ENCODE measurements at regions of chr2 and their contacts with region 1.

Region 1: GRCh38 chr2:18378020-18378653 is 182.3 kb downstream of the RDH14 start:
- DNase-seq: no peak
- ATAC-seq: peak; percentile 54

Region 2: DNA sequence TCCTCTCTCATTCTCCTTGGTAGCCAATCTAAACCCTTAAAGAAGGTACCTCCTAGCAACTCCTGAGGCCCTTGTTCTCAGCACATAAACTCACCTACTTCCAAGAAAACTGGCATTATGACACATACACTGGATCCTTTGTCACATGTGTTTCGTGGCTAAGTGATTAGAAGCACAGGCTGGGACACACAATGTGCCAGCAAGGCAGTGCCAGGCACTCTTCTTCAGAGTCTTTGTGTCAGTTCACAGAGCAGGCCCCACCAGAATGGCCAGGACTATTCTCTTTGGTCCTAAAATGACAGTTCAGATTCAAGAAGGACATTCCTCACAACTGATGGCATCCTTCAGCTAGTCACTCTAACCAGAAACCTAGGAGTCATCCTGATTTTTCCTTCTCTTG is 664.8 kb before region 1 on chr2:
- intact Hi-C with region 1: no loop called
- DNase-seq: no peak
- ATAC-seq: peak; percentile 20

Region 3: DNA sequence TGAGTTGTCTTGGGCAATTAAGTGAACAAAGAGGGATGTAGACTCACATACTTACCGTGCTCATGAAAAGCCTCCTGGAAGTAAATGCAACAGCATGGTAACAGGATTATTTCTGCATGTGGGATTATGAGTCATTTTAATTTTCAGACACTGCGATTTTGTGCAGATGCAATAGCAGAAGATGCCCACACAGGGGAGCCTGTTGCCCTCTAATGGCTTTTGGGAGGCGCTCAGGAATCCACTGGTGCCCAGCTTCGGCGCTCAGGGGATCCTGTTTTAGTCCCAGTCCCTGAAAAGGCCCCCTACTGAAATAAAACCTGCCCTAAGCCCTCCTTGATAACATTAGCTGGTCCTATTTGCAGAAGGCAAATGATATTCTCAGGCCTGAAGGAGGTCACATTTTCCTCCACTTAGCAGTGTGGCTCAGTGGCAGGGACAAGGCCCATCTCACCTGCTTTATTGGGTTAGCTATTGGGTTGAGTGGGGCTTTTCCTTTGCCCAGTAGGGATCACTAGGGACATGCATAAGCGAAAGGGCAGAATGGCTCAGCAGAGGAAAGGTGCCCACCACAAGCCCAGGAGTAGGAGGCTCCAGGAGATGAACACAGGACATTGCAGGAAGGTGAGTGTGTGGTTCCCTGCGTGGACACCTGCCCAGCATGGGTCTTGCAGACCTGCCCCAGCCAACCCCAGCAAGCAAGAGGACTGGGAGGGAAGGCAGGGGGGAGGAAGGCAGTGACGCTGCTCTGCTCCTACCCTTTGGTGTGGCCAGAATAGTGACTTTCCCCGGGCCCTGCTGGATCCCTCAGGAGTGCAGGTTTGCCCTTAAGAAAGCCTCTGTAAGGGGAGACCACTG is 526.2 kb before region 1 on chr2:
- intact Hi-C with region 1: loop called (anchors 5 kb)
- DNase-seq: peak; percentile 47
- ATAC-seq: peak; percentile 80

Region 4: DNA sequence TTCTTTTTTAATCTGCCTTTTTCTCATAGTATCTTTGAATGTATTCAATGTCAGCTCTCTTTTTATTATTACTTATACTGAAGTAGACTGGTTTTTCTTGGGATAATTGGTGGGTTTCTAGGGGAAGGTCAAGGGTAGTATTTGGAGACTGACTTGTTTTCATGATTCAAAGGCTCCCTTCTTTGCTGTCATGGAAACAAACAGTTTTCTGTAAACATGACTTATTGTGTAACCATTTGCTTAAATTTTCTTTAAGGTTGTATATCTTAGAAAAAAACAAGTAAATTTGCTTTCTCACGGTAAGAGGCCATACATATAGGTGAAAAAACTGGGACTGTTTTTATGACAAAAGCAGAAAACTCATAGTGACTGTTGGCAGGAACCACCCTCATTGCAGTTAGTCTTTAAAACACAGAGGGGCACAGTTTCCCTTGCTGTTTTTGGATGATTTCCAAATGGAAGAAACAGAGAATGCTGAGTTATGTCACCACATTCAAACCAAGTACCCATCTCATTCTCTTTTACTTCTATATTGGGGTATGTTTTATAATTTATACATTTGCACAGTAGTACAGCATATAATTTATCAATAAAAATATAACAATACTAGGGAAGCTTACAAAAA is 188.1 kb after region 1 on chr2:
- intact Hi-C with region 1: no loop called
- DNase-seq: no peak
- ATAC-seq: no peak

Measured in left ventricle myocardium superior (tissue), 1 donor.